Activated CD4-positive, alpha-beta memory T cell treated with anti-CD3 and anti-CD28 coated beads for 36 hours (primary cell): ENCODE measurements at regions of chr16 and their contacts with region 1.

Region 1: DNA sequence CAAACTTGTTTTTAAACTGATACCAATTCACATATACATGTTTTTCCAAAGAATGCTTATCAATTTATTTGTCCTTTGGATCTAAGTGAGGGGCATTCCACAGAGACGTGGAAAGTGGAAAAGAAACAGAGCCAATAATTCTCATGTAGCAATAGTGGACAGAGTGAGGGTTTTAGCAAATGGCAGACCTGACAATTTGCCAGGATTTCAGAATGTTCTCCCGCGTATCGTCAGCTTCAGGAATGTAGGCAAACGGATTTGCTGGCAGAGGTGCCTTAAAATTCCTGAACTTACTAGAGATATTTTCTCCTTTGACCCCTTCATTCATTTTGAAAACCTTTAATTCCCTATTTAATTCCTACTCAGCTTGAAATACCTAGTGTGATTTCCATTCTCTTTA is 193.4 kb upstream of the CPHXL start:
- DNase-seq: no peak
- H3K4me3 Mint-ChIP-seq: no peak overlapping the region
- H3K27ac Mint-ChIP-seq: no peak overlapping the region
- H3K4me1 Mint-ChIP-seq: no peaks in the 10 kb centered on the region
- H3K27me3 Mint-ChIP-seq: peaks cover 2% of the 10 kb centered on the region

Region 2: GRCh38 chr16:74199066-74199841 is 1720.4 kb before region 1 on chr16:
- CTCF ChIA-PET with region 1: no interaction called
- POLR2A ChIA-PET with region 1: no interaction called
- intact Hi-C with region 1: loop called (anchors 5 kb)
- DNase-seq: no peak
- H3K4me3 Mint-ChIP-seq: no peak overlapping the region
- H3K27ac Mint-ChIP-seq: no peak overlapping the region
- H3K4me1 Mint-ChIP-seq: no peaks in the 10 kb centered on the region
- H3K27me3 Mint-ChIP-seq: peaks cover 11% of the 10 kb centered on the region

Region 3: DNA sequence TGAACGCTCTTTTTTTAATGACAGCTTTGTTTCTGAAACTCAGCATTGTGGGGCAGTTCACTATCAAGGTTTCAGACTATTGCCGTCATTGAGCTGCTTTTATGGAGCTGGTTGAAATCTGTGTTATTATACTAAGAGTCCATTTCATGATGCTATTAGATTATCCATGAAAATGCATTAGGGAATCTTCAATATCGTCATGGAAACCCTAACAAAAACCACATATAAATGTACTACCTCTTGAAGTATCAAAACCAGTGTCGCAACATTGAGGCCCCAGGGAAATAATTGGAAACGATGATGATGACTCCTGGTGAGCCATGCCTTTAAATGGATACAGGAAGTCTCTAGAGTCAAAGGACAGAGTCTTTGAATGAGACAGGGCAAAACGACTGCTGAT is 38.2 kb after region 1 on chr16:
- CTCF ChIA-PET with region 1: no interaction called
- POLR2A ChIA-PET with region 1: no interaction called
- intact Hi-C with region 1: no loop called
- DNase-seq: no peak
- H3K4me3 Mint-ChIP-seq: no peak overlapping the region
- H3K27ac Mint-ChIP-seq: no peak overlapping the region
- H3K4me1 Mint-ChIP-seq: no peaks in the 10 kb centered on the region
- H3K27me3 Mint-ChIP-seq: no peaks in the 10 kb centered on the region

Region 4: DNA sequence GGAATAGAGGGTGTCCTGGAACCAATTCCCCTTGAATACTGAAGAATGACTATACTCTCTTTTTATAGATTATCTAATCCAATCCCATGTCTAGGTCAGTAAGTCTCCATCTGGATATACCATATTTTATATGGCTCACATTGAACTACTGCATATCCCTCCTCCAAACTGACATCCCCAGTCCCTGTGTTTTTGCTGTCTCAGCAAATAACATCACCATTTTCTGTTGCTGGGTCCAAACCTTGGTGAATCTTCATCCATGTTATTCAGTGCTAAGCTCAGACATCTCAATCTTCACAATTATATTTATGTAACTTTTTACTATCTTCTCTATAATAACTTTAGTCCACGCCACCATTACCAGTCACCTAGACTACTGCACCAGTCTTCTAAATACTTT is 88.0 kb after region 1 on chr16:
- CTCF ChIA-PET with region 1: no interaction called
- POLR2A ChIA-PET with region 1: no interaction called
- intact Hi-C with region 1: no loop called
- DNase-seq: no peak
- H3K4me3 Mint-ChIP-seq: no peak overlapping the region
- H3K27ac Mint-ChIP-seq: no peak overlapping the region
- H3K4me1 Mint-ChIP-seq: no peaks in the 10 kb centered on the region
- H3K27me3 Mint-ChIP-seq: no peaks in the 10 kb centered on the region

Region 5: DNA sequence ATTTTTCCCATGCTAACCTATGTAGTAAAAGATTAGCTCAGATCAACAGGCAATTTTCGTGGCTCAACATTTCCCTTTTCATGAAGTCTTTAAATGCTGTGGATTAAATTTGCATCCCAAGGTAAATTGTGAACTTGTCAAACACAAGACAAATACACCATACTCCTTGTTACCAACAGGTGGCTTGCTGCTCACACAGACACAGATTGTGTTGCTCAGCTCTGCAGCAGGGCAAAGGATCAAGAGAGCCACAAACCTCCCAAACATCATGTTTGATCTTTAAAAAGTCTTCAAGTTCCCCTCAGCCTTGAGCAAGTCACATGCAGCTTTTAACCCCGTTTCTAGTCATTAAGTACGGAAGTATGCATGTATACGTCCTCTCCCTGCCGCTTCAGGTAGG is 238.0 kb after region 1 on chr16:
- CTCF ChIA-PET with region 1: no interaction called
- POLR2A ChIA-PET with region 1: no interaction called
- intact Hi-C with region 1: no loop called
- DNase-seq: no peak
- H3K4me3 Mint-ChIP-seq: no peak overlapping the region
- H3K27ac Mint-ChIP-seq: no peak overlapping the region
- H3K4me1 Mint-ChIP-seq: no peaks in the 10 kb centered on the region
- H3K27me3 Mint-ChIP-seq: no peaks in the 10 kb centered on the region